Endothelial cell of umbilical vein (primary cell): ENCODE measurements at regions of chr2 and their contacts with region 1.

Region 1: DNA sequence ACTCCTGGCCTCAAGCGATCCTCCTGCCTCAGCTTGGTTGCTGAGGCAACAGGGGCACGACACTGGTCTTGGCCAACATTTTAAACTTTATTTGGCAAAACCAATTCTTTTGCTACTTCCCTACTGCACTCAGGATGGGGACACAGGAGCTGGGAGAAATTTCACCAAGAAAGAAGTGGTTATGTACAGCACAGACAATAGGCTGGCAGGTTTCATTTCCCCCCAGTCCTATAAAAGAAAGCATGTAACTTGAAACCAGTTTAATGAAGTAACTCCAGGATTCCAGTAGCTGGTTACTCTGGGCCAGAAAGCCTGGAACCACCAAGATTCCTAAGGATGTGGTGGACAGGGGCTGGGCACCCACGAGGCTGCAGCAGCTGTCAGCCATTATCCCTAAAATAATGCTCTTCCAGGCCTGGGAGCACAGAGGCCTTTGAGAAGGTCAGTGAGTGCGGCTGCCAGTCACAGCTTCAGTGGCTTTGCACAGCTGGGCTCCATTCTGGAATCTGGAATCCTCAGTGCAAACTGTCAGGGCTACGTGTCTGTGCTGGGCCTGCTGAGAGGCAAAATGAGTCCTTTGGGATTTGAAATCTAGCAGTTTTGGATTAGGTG is 142.3 kb upstream of the ITGA6 start:
- DNase-seq: peak; percentile 79
- H3K4me3 ChIP-seq: no peak overlapping the region
- H3K27ac ChIP-seq: peak overlapping the region; percentile 94
- H3K4me1 ChIP-seq: peaks cover 76% of the 10 kb centered on the region
- H3K27me3 ChIP-seq: no peaks in the 10 kb centered on the region
- CTCF ChIP-seq: no peak
- POLR2A ChIP-seq: no peak

Region 2: GRCh38 chr2:172200495-172201085 is 84.5 kb before region 1 on chr2:
- CTCF ChIA-PET with region 1: interaction called, 3 read pairs
- POLR2A ChIA-PET with region 1: no interaction called
- dilution Hi-C with region 1: no loop called
- intact Hi-C with region 1: loop called (anchors 1 kb)
- DNase-seq: peak; percentile 53
- H3K4me3 ChIP-seq: no peak overlapping the region
- H3K27ac ChIP-seq: no peak overlapping the region
- H3K4me1 ChIP-seq: no peaks in the 10 kb centered on the region
- H3K27me3 ChIP-seq: no peaks in the 10 kb centered on the region
- CTCF ChIP-seq: peak; percentile 42 to 47
- POLR2A ChIP-seq: no peak

Region 3: GRCh38 chr2:172253190-172254052 is 31.7 kb before region 1 on chr2:
- CTCF ChIA-PET with region 1: interaction called, 12 read pairs
- POLR2A ChIA-PET with region 1: interaction called, 3 read pairs
- dilution Hi-C with region 1: no loop called
- intact Hi-C with region 1: loop called (anchors 1 kb)
- DNase-seq: peak; percentile 99
- H3K4me3 ChIP-seq: no peak overlapping the region
- H3K27ac ChIP-seq: peak overlapping the region; percentile 95
- H3K4me1 ChIP-seq: peaks cover 54% of the 10 kb centered on the region
- H3K27me3 ChIP-seq: no peaks in the 10 kb centered on the region
- CTCF ChIP-seq: no peak
- POLR2A ChIP-seq: peak; percentile 68

Region 4: DNA sequence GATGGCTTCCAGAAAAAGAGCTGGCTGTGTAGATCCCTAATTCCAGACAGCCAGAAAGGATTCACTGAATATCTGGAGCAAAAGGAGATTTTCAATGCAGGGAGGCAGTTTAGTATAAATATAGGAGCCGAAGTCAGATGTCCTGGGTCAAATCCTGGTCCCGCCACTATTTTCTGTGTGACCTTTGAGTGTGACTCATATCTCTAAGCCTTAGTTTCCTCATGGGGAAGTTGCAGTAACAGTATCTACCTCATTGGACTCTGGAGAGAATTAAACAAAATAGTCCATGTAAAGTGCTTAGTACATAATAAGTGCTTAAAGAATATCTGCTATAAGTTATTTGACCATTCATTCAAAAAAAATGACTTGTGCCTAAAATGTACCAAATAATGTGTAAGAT is 90.1 kb after region 1 on chr2:
- CTCF ChIA-PET with region 1: no interaction called
- POLR2A ChIA-PET with region 1: no interaction called
- dilution Hi-C with region 1: no loop called
- intact Hi-C with region 1: loop called (anchors 5 kb)
- DNase-seq: peak; percentile 35
- H3K4me3 ChIP-seq: no peak overlapping the region
- H3K27ac ChIP-seq: no peak overlapping the region
- H3K4me1 ChIP-seq: peaks cover 9% of the 10 kb centered on the region
- H3K27me3 ChIP-seq: no peaks in the 10 kb centered on the region
- CTCF ChIP-seq: no peak
- POLR2A ChIP-seq: no peak

Region 5: GRCh38 chr2:172427256-172427989 is 142.3 kb after region 1 on chr2 and contains the start of gene ITGA6:
- CTCF ChIA-PET with region 1: interaction called, 10 read pairs
- POLR2A ChIA-PET with region 1: interaction called, 5 read pairs
- dilution Hi-C with region 1: no loop called
- intact Hi-C with region 1: loop called (anchors 1 kb)
- DNase-seq: peak; percentile 78
- H3K4me3 ChIP-seq: peak within 1 kb of the TSS; percentile 67 to 98 (median 68)
- H3K27ac ChIP-seq: peak within 1 kb of the TSS; percentile 52
- H3K4me1 ChIP-seq: peaks cover 40% of the 10 kb centered on the region
- H3K27me3 ChIP-seq: no peaks in the 10 kb centered on the region
- CTCF ChIP-seq: peak; percentile 4 to 33
- POLR2A ChIP-seq: peak; percentile 87
- total RNA-seq, gene ITGA6: 174 and 208 TPM in 2 replicates

Region 6: DNA sequence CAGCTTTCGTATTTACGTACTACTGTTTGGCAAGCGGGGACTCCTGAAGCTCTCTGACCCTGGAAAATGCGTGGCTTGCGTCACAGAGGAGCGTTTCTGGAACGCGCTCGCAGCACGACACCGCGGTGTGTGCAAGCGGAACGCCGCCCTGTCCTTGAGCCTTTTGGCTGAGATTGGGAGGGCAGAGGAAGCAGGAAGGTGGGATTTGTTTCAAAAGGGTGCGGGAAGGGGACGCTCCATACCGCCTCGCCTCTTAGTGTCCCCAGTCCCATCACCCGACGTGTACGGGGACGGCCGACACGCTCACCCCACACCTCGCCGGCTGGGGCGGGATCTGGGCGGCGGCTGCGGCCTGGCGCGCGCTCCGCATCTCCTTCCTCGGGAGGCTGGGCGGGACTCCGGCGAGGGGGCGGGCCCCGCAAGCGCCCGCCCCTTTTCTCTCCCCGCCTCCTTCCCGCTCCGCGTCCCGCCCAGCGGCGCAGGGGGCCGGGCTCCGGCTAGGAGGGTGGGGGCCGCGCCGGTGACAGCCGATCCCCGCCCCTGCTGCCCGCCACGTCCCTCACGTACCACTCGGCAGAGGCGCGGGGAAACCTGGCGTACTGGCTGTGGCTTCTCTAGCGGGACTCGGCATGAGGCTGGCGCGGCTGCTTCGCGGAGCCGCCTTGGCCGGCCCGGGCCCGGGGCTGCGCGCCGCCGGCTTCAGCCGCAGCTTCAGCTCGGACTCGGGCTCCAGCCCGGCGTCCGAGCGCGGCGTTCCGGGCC is 270.6 kb after region 1 on chr2 and contains the start of gene PDK1:
- CTCF ChIA-PET with region 1: no interaction called
- POLR2A ChIA-PET with region 1: no interaction called
- dilution Hi-C with region 1: no loop called
- intact Hi-C with region 1: loop called (anchors 5 kb)
- DNase-seq: peak; percentile 90
- H3K4me3 ChIP-seq: peak within 1 kb of the TSS; percentile 11 to 53 (median 51)
- H3K27ac ChIP-seq: peak within 1 kb of the TSS; percentile 74
- H3K4me1 ChIP-seq: peaks cover 27% of the 10 kb centered on the region
- H3K27me3 ChIP-seq: no peaks in the 10 kb centered on the region
- CTCF ChIP-seq: no peak
- POLR2A ChIP-seq: peak; percentile 95
- total RNA-seq, gene PDK1: 7.7 and 16.9 TPM in 2 replicates